Common myeloid progenitor, CD34-positive (primary cell): ENCODE measurements at regions of chr21 and their contacts with region 1.

Region 1: DNA sequence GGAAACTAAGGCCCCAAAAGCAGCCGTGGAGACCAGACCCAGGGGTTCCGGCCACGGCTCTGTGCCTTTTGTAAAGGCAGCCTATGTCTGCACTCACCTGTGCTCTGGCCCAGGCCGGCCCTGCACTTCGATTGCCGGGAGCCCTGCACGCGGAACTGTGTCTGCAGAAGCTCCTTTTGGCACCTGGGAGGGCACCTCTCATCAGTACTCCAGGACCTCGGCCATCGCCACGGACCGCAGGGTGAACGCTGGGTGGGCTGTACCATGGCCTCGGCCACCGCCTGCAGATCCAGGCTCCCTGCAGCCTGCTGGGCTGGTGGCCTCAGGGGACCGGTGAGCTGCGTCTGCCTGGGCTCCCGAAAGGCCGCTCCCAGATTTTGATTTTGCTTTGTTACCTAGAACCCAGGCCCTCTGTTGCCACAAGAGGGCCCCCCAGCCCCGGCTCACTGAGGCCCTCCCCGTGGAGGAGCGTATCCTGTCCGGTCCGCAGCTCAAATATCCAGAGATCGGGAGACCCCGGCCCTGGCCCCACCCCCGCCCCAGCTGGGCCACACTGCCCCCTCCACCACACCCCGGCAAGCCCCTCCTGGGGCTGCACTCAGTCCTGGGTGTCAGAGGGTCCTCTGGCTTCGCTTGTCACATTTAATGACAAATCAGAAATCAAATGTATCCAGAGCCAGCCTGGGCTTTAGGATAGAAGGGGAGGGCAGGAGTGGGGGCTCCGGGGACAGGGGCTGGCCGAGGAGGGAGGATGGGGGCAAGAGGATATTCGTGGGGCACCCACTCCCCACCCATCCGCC is 60.2 kb upstream of the PDE9A start:
- DNase-seq: peak; percentile 46 to 53 (median 52)
- H3K4me3 ChIP-seq: peak overlapping the region in 2 of 7 experiments; percentile 36 to 58
- H3K27ac ChIP-seq: no peak overlapping the region
- H3K4me1 ChIP-seq: peaks cover 0 to 35% (median 29%) of the 10 kb centered on the region in 4 experiments
- H3K27me3 ChIP-seq: no peaks in the 10 kb centered on the region

Region 2: GRCh38 chr21:42570841-42571387 is 22.3 kb before region 1 on chr21:
- CTCF ChIA-PET with region 1: no interaction called
- POLR2A ChIA-PET with region 1: no interaction called
- DNase-seq: no peak
- H3K4me3 ChIP-seq: no peak overlapping the region
- H3K27ac ChIP-seq: no peak overlapping the region
- H3K4me1 ChIP-seq: no peaks in the 10 kb centered on the region
- H3K27me3 ChIP-seq: no peaks in the 10 kb centered on the region

Region 3: GRCh38 chr21:42581993-42582786 is 11.0 kb before region 1 on chr21:
- CTCF ChIA-PET with region 1: interaction called, 19 read pairs
- POLR2A ChIA-PET with region 1: no interaction called
- DNase-seq: no peak
- H3K4me3 ChIP-seq: no peak overlapping the region
- H3K27ac ChIP-seq: no peak overlapping the region
- H3K4me1 ChIP-seq: no peaks in the 10 kb centered on the region
- H3K27me3 ChIP-seq: no peaks in the 10 kb centered on the region

Region 4: GRCh38 chr21:42818328-42818749 is 225.1 kb after region 1 on chr21:
- CTCF ChIA-PET with region 1: interaction called, 36 read pairs
- POLR2A ChIA-PET with region 1: no interaction called
- DNase-seq: peak; percentile 54 to 68 (median 56)
- H3K4me3 ChIP-seq: no peak overlapping the region
- H3K27ac ChIP-seq: no peak overlapping the region
- H3K4me1 ChIP-seq: peaks cover 0 to 5% (median 3%) of the 10 kb centered on the region in 4 experiments
- H3K27me3 ChIP-seq: no peaks in the 10 kb centered on the region

Region 5: GRCh38 chr21:42830456-42831455 is 237.5 kb after region 1 on chr21:
- CTCF ChIA-PET with region 1: interaction called, 11 read pairs
- POLR2A ChIA-PET with region 1: no interaction called
- DNase-seq: peak; percentile 49 to 80 (median 80)
- H3K4me3 ChIP-seq: peak overlapping the region in 2 of 7 experiments; percentile 45 to 52
- H3K27ac ChIP-seq: no peak overlapping the region
- H3K4me1 ChIP-seq: peaks cover 0 to 22% (median 15%) of the 10 kb centered on the region in 4 experiments
- H3K27me3 ChIP-seq: peaks cover 0 to 11% (median 4%) of the 10 kb centered on the region in 5 experiments